Aorta (tissue), 5 donors: ENCODE measurements at regions of chr3 and their contacts with region 1.

Region 1: GRCh38 chr3:53347261-53348064 is at the start of gene DCP1A:
- DNase-seq: peak; percentile 98
- ATAC-seq: peak; percentile 100
- H3K4me3 ChIP-seq: peak within 1 kb of the TSS; percentile 71 to 81
- H3K27ac ChIP-seq: peak within 1 kb of the TSS; percentile 74 to 91
- H3K4me1 ChIP-seq: no peaks in the 10 kb centered on the region
- H3K27me3 ChIP-seq: no peaks in the 10 kb centered on the region
- total RNA-seq, gene DCP1A: 26.8 to 27.0 TPM

Region 2: GRCh38 chr3:53083521-53083920 is 263.9 kb before region 1 on chr3:
- intact Hi-C with region 1: no loop called
- DNase-seq: peak; percentile 46 to 62
- ATAC-seq: no peak
- H3K4me3 ChIP-seq: no peak overlapping the region
- H3K27ac ChIP-seq: no peak overlapping the region
- H3K4me1 ChIP-seq: peaks cover 0 to 1% of the 10 kb centered on the region in 2 donors
- H3K27me3 ChIP-seq: no peaks in the 10 kb centered on the region

Region 3: DNA sequence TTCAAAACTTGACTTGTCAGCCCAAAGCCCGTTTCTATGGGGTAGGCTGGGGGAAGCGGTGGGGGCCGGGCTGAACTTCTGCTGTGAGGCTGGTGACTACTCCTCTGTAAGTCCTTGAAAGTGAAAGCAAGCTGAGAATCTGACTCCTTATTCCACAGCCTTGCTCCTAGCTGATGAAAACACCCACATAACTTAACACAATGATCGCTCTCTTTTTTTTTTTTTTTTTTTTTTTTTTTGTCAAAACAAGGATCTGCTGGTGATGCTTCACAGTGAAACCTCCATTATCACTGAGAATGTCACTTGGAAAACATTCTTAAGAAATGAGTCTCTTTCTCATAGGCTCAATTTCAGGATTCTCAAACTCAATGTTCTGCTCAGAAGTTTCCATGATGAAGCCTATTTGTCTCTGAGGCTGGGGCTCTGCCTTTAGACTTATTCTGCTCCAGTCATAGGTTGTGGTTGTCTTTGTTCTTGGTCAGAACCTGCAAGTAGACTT is 60.3 kb before region 1 on chr3:
- intact Hi-C with region 1: no loop called
- DNase-seq: no peak
- ATAC-seq: no peak
- H3K4me3 ChIP-seq: no peak overlapping the region
- H3K27ac ChIP-seq: no peak overlapping the region
- H3K4me1 ChIP-seq: no peaks in the 10 kb centered on the region
- H3K27me3 ChIP-seq: no peaks in the 10 kb centered on the region

Region 4: DNA sequence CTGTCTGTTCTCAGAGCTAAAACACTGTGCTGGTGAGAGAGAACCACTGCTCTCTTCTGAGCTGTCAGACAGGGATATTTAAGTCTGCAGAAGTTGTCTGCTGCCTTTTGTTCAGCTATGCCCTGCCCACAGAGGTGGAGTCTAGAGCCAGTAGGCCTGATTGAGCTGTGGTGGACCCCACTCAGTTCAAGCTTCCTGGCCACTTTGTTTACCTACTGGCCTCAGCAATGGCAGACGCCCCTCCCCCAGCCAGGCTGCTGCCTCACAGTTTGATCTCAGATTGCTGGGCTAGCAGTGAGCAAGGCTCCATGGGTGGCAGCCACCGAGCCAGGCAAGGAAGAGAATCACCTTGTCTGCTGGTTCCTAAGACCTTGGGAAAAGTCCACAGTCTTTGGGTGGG is 126.0 kb after region 1 on chr3:
- intact Hi-C with region 1: no loop called
- DNase-seq: no peak
- ATAC-seq: no peak
- H3K4me3 ChIP-seq: no peak overlapping the region
- H3K27ac ChIP-seq: no peak overlapping the region
- H3K4me1 ChIP-seq: no peaks in the 10 kb centered on the region
- H3K27me3 ChIP-seq: no peaks in the 10 kb centered on the region

Region 5: DNA sequence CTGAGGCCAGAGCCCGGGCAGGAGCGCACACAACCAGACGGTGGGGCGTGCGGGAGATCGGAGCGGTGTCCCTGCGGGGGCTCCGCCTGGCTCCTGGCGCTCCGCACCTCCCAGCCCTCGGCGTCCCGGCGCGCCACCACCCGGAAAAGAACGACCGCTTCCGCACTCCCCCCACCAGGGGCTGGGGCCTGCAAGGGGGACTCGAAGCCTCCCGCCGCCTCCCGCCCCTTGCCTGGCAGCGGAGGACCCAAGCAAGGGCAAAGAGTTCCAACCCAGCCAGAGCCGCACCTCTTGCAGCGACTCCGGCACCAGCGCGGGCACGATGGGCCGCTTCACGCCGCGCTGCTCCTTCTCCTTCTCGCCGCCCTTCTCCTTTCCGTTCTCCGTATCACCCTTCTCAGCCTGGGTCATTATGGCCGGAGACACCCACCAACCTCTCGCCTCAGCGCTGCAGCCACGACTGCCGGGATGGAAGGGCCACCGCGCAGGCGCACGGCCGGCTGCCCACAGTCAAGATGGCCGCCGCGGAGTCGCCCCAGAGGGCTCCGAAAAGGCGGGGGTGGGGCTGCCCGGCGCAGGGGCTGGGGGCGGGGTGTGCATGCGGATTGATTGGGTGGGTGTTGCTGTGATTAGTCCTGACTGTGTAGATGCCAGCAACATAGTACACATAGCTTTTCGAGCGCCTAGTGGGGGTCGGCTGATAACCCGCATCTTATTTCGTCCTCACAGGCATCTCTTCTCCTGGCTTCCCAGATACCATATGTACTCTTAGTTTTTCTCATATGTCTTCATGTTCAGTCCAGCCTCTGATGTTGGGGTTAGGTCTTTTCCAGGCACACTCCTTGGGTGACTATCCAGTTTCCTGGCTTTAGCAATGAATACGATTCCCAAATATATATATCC is 534.5 kb after region 1 on chr3 and contains the start of gene ACTR8:
- intact Hi-C with region 1: loop called in 1 of 2 experiments (anchors 10 kb)
- DNase-seq: peak; percentile 90 to 95
- ATAC-seq: peak; percentile 99
- H3K4me3 ChIP-seq: peak within 1 kb of the TSS; percentile 67 to 95
- H3K27ac ChIP-seq: peak within 1 kb of the TSS in 1 of 2 donors; percentile 77
- H3K4me1 ChIP-seq: no peaks in the 10 kb centered on the region
- H3K27me3 ChIP-seq: no peaks in the 10 kb centered on the region
- total RNA-seq, gene ACTR8: 18.9 to 29.1 TPM